Dorsolateral prefrontal cortex (tissue), 120 donors: ENCODE measurements at regions of chr2 and their contacts with region 1.

Region 1: DNA sequence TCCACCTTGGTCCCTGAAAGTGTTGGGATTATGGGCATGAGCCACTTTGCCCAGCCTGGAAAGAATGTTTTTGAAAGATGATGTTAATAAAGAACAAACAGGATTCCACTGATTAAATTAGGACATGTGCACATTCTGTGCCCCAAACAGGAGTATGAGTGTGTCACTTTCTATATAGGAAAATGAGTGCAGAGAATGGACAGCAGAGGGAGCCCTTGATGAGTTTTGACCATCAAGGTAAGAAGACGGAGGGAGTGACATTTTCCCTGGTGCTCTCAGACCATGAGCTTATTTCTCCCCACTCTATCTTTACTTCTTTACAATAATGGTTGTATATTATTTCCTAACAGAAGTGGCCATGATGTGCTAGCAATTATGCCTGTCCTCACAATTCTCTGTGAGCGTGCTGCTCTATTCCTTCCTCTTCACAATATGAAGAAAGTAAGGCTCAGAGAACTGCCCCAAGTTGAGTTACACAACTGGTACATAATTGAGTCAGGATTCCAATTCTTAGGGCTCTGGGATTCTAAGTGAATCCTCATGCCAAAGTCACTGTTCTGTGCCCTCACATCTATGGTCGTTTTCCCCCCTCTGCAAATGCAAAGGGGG is 20.6 kb downstream of the RPL37A start:
- DNase-seq: peak in 4 of 10 donors; percentile 34 to 78 (median 54)
- H3K4me3 ChIP-seq: no peak overlapping the region
- H3K27ac ChIP-seq: no peak overlapping the region
- H3K27me3 ChIP-seq: no peaks in the 10 kb centered on the region
- CTCF ChIP-seq: peak; percentile 72 to 94 (median 85)

Region 2: DNA sequence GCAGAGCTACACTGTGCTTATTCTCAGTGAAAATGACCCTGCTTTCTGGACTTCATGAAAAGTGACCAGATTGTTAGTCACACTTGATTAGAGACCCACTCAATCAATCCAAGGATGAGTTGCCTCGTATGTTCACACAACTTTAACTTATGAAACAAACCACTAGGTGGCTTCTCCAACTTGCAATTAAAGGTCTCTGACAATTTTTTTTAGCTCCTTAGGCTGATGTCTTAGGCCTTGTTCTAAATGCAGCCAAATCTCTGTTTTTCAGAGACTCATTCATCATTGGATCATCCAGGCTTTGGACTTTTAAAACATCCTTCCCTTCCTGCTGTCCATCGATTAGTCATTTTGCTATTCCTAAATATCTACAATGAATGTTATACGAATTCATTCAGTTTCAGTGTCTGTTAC is 569.3 kb before region 1 on chr2:
- intact Hi-C with region 1: no loop called
- DNase-seq: no peak
- H3K4me3 ChIP-seq: no peak overlapping the region
- H3K27ac ChIP-seq: no peak overlapping the region
- H3K27me3 ChIP-seq: no peaks in the 10 kb centered on the region
- CTCF ChIP-seq: peak; percentile 14 to 71 (median 52)

Region 3: DNA sequence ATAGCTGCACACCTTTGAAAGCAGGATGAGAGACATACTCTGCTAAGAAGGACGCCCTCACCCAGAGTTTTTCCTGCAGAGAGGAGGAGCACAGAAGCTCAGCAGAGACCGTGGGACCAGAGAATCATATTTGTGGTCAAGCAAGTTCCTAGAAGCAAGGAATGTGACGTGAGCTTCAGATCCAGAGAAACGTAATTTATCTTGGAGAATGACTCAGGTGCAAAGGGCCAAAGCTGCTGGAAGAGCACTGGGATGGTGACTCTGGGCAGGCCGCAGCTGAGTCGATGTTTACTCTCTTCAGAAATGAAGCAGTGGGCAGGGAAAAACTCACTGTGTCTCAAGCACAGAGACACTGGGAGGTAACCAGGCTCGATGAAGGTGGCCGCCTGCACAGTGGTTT is 63.9 kb after region 1 on chr2:
- intact Hi-C with region 1: loop called in 1 of 2 experiments (anchors 5 kb)
- DNase-seq: no peak
- H3K4me3 ChIP-seq: peak overlapping the region in 1 of 59 donors; percentile 14
- H3K27ac ChIP-seq: peak overlapping the region in 11 of 59 donors; percentile 53 to 83 (median 69)
- H3K27me3 ChIP-seq: peaks cover 0 to 3% (median 0%) of the 10 kb centered on the region in 45 donors
- CTCF ChIP-seq: no peak

Region 4: GRCh38 chr2:216700088-216700567 is 180.9 kb after region 1 on chr2:
- intact Hi-C with region 1: no loop called
- DNase-seq: no peak
- H3K4me3 ChIP-seq: no peak overlapping the region
- H3K27ac ChIP-seq: no peak overlapping the region
- H3K27me3 ChIP-seq: peaks cover 0 to 4% (median 0%) of the 10 kb centered on the region in 45 donors
- CTCF ChIP-seq: no peak